Transverse colon (tissue), 4 donors: ENCODE measurements at regions of chr2 and their contacts with region 1.

Region 1: GRCh38 chr2:114550895-114551793 is 108.7 kb downstream of the DPP10 start:
- DNase-seq: peak; percentile 76
- H3K4me3 ChIP-seq: no peak overlapping the region
- H3K27ac ChIP-seq: peak overlapping the region in 1 of 4 donors; percentile 34
- H3K4me1 ChIP-seq: peaks cover 0 to 17% (median 9%) of the 10 kb centered on the region in 4 donors
- H3K27me3 ChIP-seq: no peaks in the 10 kb centered on the region
- CTCF ChIP-seq: peak; percentile 48 to 78 (median 73)
- EP300 ChIP-seq: no peak
- POLR2A ChIP-seq: no peak

Region 2: GRCh38 chr2:113965644-113966043 is 585.5 kb before region 1 on chr2:
- in situ Hi-C with region 1: loop called in 3 of 4 experiments (anchors 10 kb)
- intact Hi-C with region 1: no loop called
- DNase-seq: no peak
- H3K4me3 ChIP-seq: no peak overlapping the region
- H3K27ac ChIP-seq: no peak overlapping the region
- H3K4me1 ChIP-seq: peaks cover 0 to 30% (median 9%) of the 10 kb centered on the region in 4 donors
- H3K27me3 ChIP-seq: no peaks in the 10 kb centered on the region
- CTCF ChIP-seq: peak; percentile 31 to 54 (median 39)
- EP300 ChIP-seq: no peak
- POLR2A ChIP-seq: no peak

Region 3: GRCh38 chr2:113977660-113978523 is 573.3 kb before region 1 on chr2:
- in situ Hi-C with region 1: loop called in 2 of 4 experiments (anchors 10 kb)
- intact Hi-C with region 1: no loop called
- DNase-seq: no peak
- H3K4me3 ChIP-seq: no peak overlapping the region
- H3K27ac ChIP-seq: peak overlapping the region in 1 of 4 donors; percentile 8
- H3K4me1 ChIP-seq: peaks cover 0 to 8% (median 4%) of the 10 kb centered on the region in 4 donors
- H3K27me3 ChIP-seq: no peaks in the 10 kb centered on the region
- CTCF ChIP-seq: peak in 4 of 5 experiments; percentile 34 to 70 (median 50)
- EP300 ChIP-seq: no peak
- POLR2A ChIP-seq: no peak